CD4-positive, alpha-beta T cell (primary cell): ENCODE measurements at regions of chr15 and their contacts with region 1.

Region 1: GRCh38 chr15:79923515-79924395 is 26.9 kb upstream of the MTHFS start:
- DNase-seq: peak; percentile 93 to 99 (median 98)
- ATAC-seq: peak; percentile 89
- H3K4me3 ChIP-seq: peak overlapping the region; percentile 80
- H3K4me3 Mint-ChIP-seq: peak overlapping the region; percentile 96
- H3K27ac ChIP-seq: peak overlapping the region; percentile 91 to 97
- H3K27ac Mint-ChIP-seq: peak overlapping the region; percentile 95
- H3K4me1 ChIP-seq: peaks cover 21% of the 10 kb centered on the region
- H3K4me1 Mint-ChIP-seq: peaks cover 27% of the 10 kb centered on the region
- H3K27me3 ChIP-seq: no peaks in the 10 kb centered on the region
- H3K27me3 Mint-ChIP-seq: no peaks in the 10 kb centered on the region
- CTCF ChIP-seq: no peak

Region 2: GRCh38 chr15:79853458-79854328 is 70.1 kb before region 1 on chr15:
- CTCF ChIA-PET with region 1: interaction called, 3 read pairs
- POLR2A ChIA-PET with region 1: interaction called, 10 read pairs
- intact Hi-C with region 1: no loop called
- DNase-seq: peak; percentile 35 to 79 (median 46)
- ATAC-seq: peak; percentile 99
- H3K4me3 ChIP-seq: no peak overlapping the region
- H3K4me3 Mint-ChIP-seq: no peak overlapping the region
- H3K27ac ChIP-seq: no peak overlapping the region
- H3K27ac Mint-ChIP-seq: peak overlapping the region; percentile 22
- H3K4me1 ChIP-seq: no peaks in the 10 kb centered on the region
- H3K4me1 Mint-ChIP-seq: peaks cover 24% of the 10 kb centered on the region
- H3K27me3 ChIP-seq: no peaks in the 10 kb centered on the region
- H3K27me3 Mint-ChIP-seq: no peaks in the 10 kb centered on the region
- CTCF ChIP-seq: peak; percentile 98

Region 3: GRCh38 chr15:79904271-79904670 is 19.5 kb before region 1 on chr15:
- CTCF ChIA-PET with region 1: interaction called, 20 read pairs
- POLR2A ChIA-PET with region 1: interaction called, 139 read pairs
- intact Hi-C with region 1: no loop called
- DNase-seq: no peak
- ATAC-seq: no peak
- H3K4me3 ChIP-seq: no peak overlapping the region
- H3K4me3 Mint-ChIP-seq: no peak overlapping the region
- H3K27ac ChIP-seq: no peak overlapping the region
- H3K27ac Mint-ChIP-seq: no peak overlapping the region
- H3K4me1 ChIP-seq: no peaks in the 10 kb centered on the region
- H3K4me1 Mint-ChIP-seq: no peaks in the 10 kb centered on the region
- H3K27me3 ChIP-seq: no peaks in the 10 kb centered on the region
- H3K27me3 Mint-ChIP-seq: no peaks in the 10 kb centered on the region
- CTCF ChIP-seq: no peak

Region 4: GRCh38 chr15:79939396-79939795 is 15.6 kb after region 1 on chr15:
- CTCF ChIA-PET with region 1: no interaction called
- POLR2A ChIA-PET with region 1: no interaction called
- intact Hi-C with region 1: no loop called
- DNase-seq: no peak
- ATAC-seq: no peak
- H3K4me3 ChIP-seq: no peak overlapping the region
- H3K4me3 Mint-ChIP-seq: no peak overlapping the region
- H3K27ac ChIP-seq: no peak overlapping the region
- H3K27ac Mint-ChIP-seq: no peak overlapping the region
- H3K4me1 ChIP-seq: no peaks in the 10 kb centered on the region
- H3K4me1 Mint-ChIP-seq: no peaks in the 10 kb centered on the region
- H3K27me3 ChIP-seq: no peaks in the 10 kb centered on the region
- H3K27me3 Mint-ChIP-seq: peaks cover 4% of the 10 kb centered on the region
- CTCF ChIP-seq: no peak

Region 5: DNA sequence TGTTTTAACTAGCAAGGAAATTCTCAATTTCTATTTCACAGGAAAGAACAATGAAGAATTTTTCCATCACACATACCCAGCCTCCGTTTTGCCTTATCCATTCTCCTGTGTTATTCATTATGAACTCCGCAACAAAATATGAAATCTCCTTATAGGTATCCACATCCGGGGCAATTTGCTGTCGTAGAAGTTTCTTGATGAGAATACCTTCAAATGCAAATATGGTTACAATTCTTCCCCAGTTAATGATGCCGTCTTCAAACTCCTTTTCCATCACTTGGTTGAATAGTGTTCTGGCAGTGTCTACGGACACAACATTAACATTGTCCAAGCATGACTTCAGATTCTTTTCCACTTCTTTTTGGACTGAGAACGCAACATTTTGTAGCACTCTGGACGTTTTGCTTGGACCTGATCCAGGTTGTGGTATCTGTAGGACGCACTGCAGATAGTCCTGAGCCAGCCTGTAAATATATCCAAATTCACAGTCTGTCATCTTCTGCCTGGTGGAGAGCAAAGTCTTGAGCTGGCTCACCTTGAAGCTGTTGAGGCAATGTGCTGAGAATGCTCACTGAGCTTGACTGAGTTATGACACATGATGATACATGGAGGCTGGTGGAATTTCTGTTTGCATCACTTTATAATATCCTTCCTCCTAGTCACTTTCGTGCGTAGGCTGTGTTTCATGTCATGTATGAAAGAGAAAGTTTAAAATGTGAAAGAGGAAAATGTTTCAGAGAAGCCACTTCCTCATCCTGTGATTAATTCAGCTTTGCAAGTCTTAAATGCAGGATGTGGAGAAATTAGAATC is 47.1 kb after region 1 on chr15 and contains the start of gene BCL2A1:
- CTCF ChIA-PET with region 1: interaction called, 3 read pairs
- POLR2A ChIA-PET with region 1: interaction called, 135 read pairs
- intact Hi-C with region 1: loop called (anchors 1 to 2 kb)
- DNase-seq: peak in 13 of 14 experiments; percentile 16 to 90 (median 42)
- ATAC-seq: peak; percentile 84
- H3K4me3 ChIP-seq: peak within 1 kb of the TSS; percentile 59
- H3K4me3 Mint-ChIP-seq: peak within 1 kb of the TSS; percentile 84
- H3K27ac ChIP-seq: peak within 1 kb of the TSS; percentile 63 to 72
- H3K27ac Mint-ChIP-seq: peak within 1 kb of the TSS; percentile 91
- H3K4me1 ChIP-seq: peaks cover 26% of the 10 kb centered on the region
- H3K4me1 Mint-ChIP-seq: peaks cover 66% of the 10 kb centered on the region
- H3K27me3 ChIP-seq: no peaks in the 10 kb centered on the region
- H3K27me3 Mint-ChIP-seq: no peaks in the 10 kb centered on the region
- CTCF ChIP-seq: no peak
- total RNA-seq, gene BCL2A1: 18.7 to 20.0 TPM

Region 6: GRCh38 chr15:80058851-80059785 is 135.4 kb after region 1 on chr15 and contains the start of gene ZFAND6:
- CTCF ChIA-PET with region 1: no interaction called
- POLR2A ChIA-PET with region 1: interaction called, 35 read pairs
- intact Hi-C with region 1: loop called in 1 of 2 experiments (anchors 2 kb)
- DNase-seq: peak; percentile 88 to 98 (median 94)
- ATAC-seq: peak; percentile 89
- H3K4me3 ChIP-seq: peak within 1 kb of the TSS; percentile 78
- H3K4me3 Mint-ChIP-seq: peak within 1 kb of the TSS; percentile 98
- H3K27ac ChIP-seq: peak within 1 kb of the TSS; percentile 72 to 82
- H3K27ac Mint-ChIP-seq: peak within 1 kb of the TSS; percentile 95
- H3K4me1 ChIP-seq: peaks cover 13% of the 10 kb centered on the region
- H3K4me1 Mint-ChIP-seq: peaks cover 33% of the 10 kb centered on the region
- H3K27me3 ChIP-seq: no peaks in the 10 kb centered on the region
- H3K27me3 Mint-ChIP-seq: no peaks in the 10 kb centered on the region
- CTCF ChIP-seq: no peak
- total RNA-seq, gene ZFAND6: 65.5 to 69.2 TPM

Region 7: DNA sequence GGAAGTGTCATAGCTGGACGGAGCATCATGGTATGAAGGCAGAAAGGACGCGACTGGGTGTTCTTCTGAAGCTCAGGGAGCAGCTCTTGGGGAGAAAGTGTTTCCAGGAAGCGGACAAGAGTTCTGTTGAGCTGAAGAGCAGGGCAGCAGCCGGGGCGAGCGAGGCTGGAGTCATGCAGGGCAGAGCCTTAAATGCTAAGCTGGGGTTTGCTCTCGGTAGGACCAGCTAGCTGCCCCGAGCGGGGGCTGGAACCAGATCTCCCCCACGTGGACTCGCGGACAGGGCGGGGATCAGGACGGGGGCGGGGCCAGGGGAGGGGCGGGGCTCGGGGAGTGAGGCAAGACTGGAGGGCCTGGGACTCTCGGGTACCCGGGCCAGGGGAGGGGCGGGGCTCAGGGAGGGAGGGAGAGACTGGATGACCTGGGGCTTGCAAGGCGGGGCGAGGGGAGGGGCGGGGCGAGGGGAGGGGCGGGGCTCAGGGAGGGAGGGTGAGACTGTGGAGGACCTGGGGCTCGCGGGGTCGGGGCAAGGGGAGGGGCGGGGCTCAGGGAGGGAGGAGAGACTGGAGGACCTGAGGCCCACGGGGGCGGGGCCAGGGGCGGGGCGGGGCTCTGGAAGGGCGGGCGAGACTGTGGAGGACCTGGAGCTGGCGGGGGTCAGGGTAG is 228.6 kb after region 1 on chr15:
- CTCF ChIA-PET with region 1: no interaction called
- POLR2A ChIA-PET with region 1: interaction called, 6 read pairs
- intact Hi-C with region 1: loop called in 1 of 2 experiments (anchors 2 kb)
- DNase-seq: peak; percentile 79 to 98 (median 86)
- ATAC-seq: peak; percentile 72
- H3K4me3 ChIP-seq: peak overlapping the region; percentile 89
- H3K4me3 Mint-ChIP-seq: peak overlapping the region; percentile 89
- H3K27ac ChIP-seq: peak overlapping the region in 1 of 2 donors; percentile 47
- H3K27ac Mint-ChIP-seq: peak overlapping the region; percentile 74
- H3K4me1 ChIP-seq: peaks cover 21% of the 10 kb centered on the region
- H3K4me1 Mint-ChIP-seq: peaks cover 29% of the 10 kb centered on the region
- H3K27me3 ChIP-seq: no peaks in the 10 kb centered on the region
- H3K27me3 Mint-ChIP-seq: no peaks in the 10 kb centered on the region
- CTCF ChIP-seq: no peak